ENCODE measurements at regions of chr3 and their contacts with region 1.

Region 1: DNA sequence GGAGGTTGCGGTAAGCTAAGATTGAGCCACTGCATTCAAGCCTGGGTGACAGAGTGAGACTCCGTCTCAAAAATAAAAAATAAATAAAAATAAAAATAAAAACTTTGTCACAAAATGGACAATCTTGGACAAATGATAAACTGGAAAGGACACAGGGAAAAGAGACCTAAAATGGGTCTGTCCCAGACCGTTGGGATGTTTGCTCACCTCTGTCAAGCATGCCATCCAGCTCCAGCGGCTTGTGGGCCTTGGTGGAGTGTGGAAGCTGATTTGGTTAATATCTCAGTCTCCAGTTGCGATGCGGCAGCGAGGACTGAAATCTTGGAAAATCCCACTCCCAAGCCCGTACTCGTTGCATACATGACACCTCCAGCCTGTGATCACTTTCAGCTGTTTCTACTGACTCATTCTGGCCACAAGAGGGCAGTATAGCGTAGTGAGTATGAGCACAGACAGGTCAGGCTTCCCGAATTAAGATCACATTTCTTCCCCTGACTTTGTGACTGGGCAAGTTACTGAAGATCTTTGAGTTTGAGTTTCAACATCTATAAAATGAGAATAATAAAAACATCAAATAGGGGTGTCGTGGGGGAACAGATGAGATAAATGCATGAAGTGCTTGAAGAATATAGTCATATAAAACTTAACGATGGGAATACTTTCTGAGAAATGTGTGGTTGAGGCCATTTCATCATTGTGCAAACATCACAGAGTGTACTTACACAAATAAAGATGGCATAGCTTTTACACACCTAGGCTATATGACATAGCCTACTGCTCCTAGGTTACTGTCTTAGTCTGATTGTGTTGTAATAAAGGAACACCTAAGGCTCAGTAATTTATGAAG is 19.6 kb upstream of the MOBP start:
- DNase-seq: peak; percentile 73
- ATAC-seq: peak; percentile 74
- H3K4me3 Mint-ChIP-seq: no peak overlapping the region
- H3K27ac Mint-ChIP-seq: no peak overlapping the region
- H3K4me1 Mint-ChIP-seq: no peaks in the 10 kb centered on the region
- H3K27me3 Mint-ChIP-seq: no peaks in the 10 kb centered on the region
- CTCF ChIP-seq: peak; percentile 88

Region 2: GRCh38 chr3:39414421-39414907 is 33.4 kb before region 1 on chr3:
- CTCF ChIA-PET with region 1: interaction called, 13 read pairs
- POLR2A ChIA-PET with region 1: interaction called, 5 read pairs
- intact Hi-C with region 1: no loop called
- DNase-seq: peak; percentile 24
- ATAC-seq: peak; percentile 38
- H3K4me3 Mint-ChIP-seq: peak overlapping the region; percentile 7
- H3K27ac Mint-ChIP-seq: peak overlapping the region; percentile 65
- H3K4me1 Mint-ChIP-seq: peaks cover 27% of the 10 kb centered on the region
- H3K27me3 Mint-ChIP-seq: no peaks in the 10 kb centered on the region
- CTCF ChIP-seq: no peak

Region 3: DNA sequence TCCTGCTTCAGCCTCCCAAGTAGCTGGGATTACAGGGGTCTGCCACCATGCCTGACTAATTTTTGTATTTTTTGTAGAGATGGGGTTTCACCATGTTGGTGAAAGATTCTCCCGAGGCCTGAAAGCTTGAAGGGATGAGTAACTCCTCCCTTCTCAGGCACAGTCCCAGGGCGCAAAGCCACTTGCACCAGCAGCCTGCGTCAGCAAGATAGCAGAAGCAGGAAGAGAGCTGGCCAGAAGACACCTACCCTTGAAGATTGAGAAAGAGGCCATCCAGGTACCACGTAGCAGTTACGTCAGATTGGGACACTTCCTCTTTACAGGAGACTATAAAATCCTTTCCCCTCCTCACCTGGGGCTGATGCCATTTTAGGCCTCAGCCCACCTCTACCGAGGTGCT is 11.2 kb after region 1 on chr3:
- CTCF ChIA-PET with region 1: interaction called, 16 read pairs
- POLR2A ChIA-PET with region 1: interaction called, 3 read pairs
- intact Hi-C with region 1: no loop called
- DNase-seq: no peak
- ATAC-seq: no peak
- H3K4me3 Mint-ChIP-seq: no peak overlapping the region
- H3K27ac Mint-ChIP-seq: no peak overlapping the region
- H3K4me1 Mint-ChIP-seq: no peaks in the 10 kb centered on the region
- H3K27me3 Mint-ChIP-seq: peaks cover 13% of the 10 kb centered on the region
- CTCF ChIP-seq: no peak

Region 4: GRCh38 chr3:39501968-39502837 is 54.3 kb after region 1 on chr3:
- CTCF ChIA-PET with region 1: interaction called, 56 read pairs
- POLR2A ChIA-PET with region 1: no interaction called
- intact Hi-C with region 1: loop called (anchors 2 kb)
- DNase-seq: no peak
- ATAC-seq: no peak
- H3K4me3 Mint-ChIP-seq: no peak overlapping the region
- H3K27ac Mint-ChIP-seq: no peak overlapping the region
- H3K4me1 Mint-ChIP-seq: peaks cover 4% of the 10 kb centered on the region
- H3K27me3 Mint-ChIP-seq: peaks cover 37% of the 10 kb centered on the region
- CTCF ChIP-seq: no peak

Measured in activated CD8-positive, alpha-beta T cell treated with anti-CD3 and anti-CD28 coated beads for 36 hours (primary cell).